Endothelial cell of umbilical vein (primary cell): ENCODE measurements at regions of chr3 and their contacts with region 1.

Region 1: GRCh38 chr3:11060500-11061251 is 68.1 kb downstream of the SLC6A1 start:
- DNase-seq: peak; percentile 54
- H3K4me3 ChIP-seq: no peak overlapping the region
- H3K27ac ChIP-seq: no peak overlapping the region
- H3K4me1 ChIP-seq: no peaks in the 10 kb centered on the region
- H3K27me3 ChIP-seq: peaks cover 2 to 4% of the 10 kb centered on the region in 2 experiments
- CTCF ChIP-seq: peak; percentile 83 to 95
- POLR2A ChIP-seq: no peak

Region 2: DNA sequence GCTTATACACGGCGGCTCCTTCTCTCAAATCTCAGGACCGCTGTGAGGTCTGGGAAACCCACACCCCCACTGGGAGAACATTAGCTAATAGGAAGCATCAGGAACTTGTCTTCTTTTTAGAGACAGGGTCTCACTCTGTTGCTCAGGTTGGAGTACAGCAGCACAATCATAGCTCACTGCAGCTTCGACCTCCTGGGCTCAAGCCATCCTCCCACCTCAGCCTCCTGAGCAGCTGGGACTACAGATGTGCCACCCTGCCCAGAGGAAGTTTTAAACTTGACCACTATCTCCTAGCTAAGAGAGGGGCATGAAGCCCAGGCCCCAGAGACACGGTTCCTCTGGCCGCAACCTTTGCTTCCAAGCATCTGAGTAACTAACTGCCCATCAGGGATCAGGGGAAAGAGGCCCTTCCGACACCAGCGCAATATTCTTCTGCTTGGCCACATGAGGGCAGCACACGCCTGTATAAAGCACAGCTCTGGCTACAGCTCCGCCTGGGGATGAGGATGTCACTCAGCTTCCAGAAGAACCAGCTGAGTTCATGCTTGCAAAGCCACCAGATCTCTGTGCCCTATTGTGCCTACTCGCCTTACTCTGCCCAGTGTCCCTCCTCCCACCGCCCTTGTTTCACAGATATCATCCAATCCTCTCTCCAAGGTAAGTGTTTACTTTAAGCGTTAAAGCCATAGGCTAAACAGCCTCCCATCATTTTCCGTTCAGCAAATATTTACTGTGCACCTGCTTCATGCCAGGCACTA is 302.2 kb before region 1 on chr3:
- CTCF ChIA-PET with region 1: interaction called, 75 read pairs
- POLR2A ChIA-PET with region 1: no interaction called
- dilution Hi-C with region 1: no loop called
- intact Hi-C with region 1: loop called (anchors 1 kb)
- DNase-seq: peak; percentile 65
- H3K4me3 ChIP-seq: no peak overlapping the region
- H3K27ac ChIP-seq: no peak overlapping the region
- H3K4me1 ChIP-seq: no peaks in the 10 kb centered on the region
- H3K27me3 ChIP-seq: no peaks in the 10 kb centered on the region
- CTCF ChIP-seq: peak; percentile 61 to 76
- POLR2A ChIP-seq: no peak

Region 3: GRCh38 chr3:10983219-10983916 is 77.3 kb before region 1 on chr3:
- CTCF ChIA-PET with region 1: interaction called, 6 read pairs
- POLR2A ChIA-PET with region 1: no interaction called
- dilution Hi-C with region 1: no loop called
- intact Hi-C with region 1: loop called (anchors 1 kb)
- DNase-seq: peak; percentile 53
- H3K4me3 ChIP-seq: no peak overlapping the region
- H3K27ac ChIP-seq: no peak overlapping the region
- H3K4me1 ChIP-seq: peaks cover 3% of the 10 kb centered on the region
- H3K27me3 ChIP-seq: peaks cover 4 to 15% of the 10 kb centered on the region in 2 experiments
- CTCF ChIP-seq: peak; percentile 69 to 74
- POLR2A ChIP-seq: no peak

Region 4: DNA sequence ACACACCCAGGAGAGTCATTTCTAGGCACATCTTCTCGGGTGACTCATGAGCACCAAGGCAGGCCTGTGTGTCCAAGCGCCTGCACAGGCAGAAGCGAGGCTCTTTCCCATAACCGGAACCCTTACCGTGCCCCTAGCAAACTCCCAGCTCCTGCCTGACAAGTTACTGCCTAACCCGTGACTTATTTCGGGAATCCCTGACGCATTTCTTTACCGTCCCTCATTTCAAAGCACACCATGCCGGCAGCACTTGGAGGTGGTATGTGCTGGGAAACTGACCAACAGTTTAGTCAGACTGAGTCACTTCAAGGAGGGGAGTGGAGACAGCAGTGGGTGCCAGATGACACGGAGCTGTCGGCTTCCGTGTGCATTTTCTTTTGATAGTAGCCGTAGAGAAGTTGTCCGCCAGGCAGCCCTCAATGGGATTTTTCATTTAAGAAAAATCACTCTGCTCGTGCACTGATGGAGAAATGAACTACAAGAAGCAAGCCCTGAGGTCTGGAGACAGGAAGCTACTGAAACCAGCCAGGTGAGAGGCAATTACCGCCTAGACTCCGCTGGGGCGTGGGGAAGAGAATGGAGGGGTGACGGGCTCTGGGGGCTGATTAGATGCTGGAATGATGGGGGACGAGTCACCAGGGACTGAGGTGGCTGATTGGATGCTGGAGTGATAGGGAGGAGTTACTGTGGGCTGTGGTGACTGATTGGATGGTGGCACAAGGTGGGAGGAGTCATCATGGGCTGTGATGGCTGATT is 76.4 kb after region 1 on chr3:
- CTCF ChIA-PET with region 1: interaction called, 10 read pairs
- POLR2A ChIA-PET with region 1: no interaction called
- dilution Hi-C with region 1: no loop called
- intact Hi-C with region 1: no loop called
- DNase-seq: peak; percentile 75
- H3K4me3 ChIP-seq: peak overlapping the region in 2 of 3 experiments; percentile 1 to 49
- H3K27ac ChIP-seq: peak overlapping the region; percentile 89
- H3K4me1 ChIP-seq: peaks cover 9% of the 10 kb centered on the region
- H3K27me3 ChIP-seq: no peaks in the 10 kb centered on the region
- CTCF ChIP-seq: no peak
- POLR2A ChIP-seq: no peak

Region 5: GRCh38 chr3:11221818-11222415 is 161.2 kb after region 1 on chr3:
- CTCF ChIA-PET with region 1: interaction called, 5 read pairs
- POLR2A ChIA-PET with region 1: no interaction called
- dilution Hi-C with region 1: no loop called
- intact Hi-C with region 1: loop called (anchors 5 kb)
- DNase-seq: no peak
- H3K4me3 ChIP-seq: no peak overlapping the region
- H3K27ac ChIP-seq: no peak overlapping the region
- H3K4me1 ChIP-seq: peaks cover 40% of the 10 kb centered on the region
- H3K27me3 ChIP-seq: no peaks in the 10 kb centered on the region
- CTCF ChIP-seq: peak; percentile 5 to 11
- POLR2A ChIP-seq: no peak

Region 6: DNA sequence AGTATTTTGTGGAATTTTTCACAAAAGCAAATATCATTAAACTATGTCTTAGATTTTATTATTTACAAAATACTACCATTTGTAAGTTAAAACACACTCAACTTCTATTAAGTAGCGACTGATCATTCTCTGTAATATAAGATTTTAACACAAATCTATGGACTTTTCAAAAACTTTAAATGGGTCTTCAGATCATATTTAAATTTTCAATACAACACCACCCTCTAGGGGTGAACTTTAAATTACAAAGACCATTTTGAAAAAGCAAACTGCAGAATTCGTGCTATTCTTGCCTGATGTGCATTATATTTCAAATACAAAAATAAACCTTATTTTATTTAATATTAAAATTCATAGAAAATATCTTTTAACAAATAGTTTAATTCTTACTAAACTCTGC is 591.2 kb after region 1 on chr3:
- CTCF ChIA-PET with region 1: interaction called, 13 read pairs
- POLR2A ChIA-PET with region 1: no interaction called
- dilution Hi-C with region 1: no loop called
- intact Hi-C with region 1: loop called (anchors 1 kb)
- DNase-seq: peak; percentile 62
- H3K4me3 ChIP-seq: no peak overlapping the region
- H3K27ac ChIP-seq: no peak overlapping the region
- H3K4me1 ChIP-seq: peaks cover 3% of the 10 kb centered on the region
- H3K27me3 ChIP-seq: no peaks in the 10 kb centered on the region
- CTCF ChIP-seq: peak in 1 of 2 donors; percentile 16
- POLR2A ChIP-seq: no peak